ENCODE measurements at regions of chr4 and their contacts with region 1.

Region 1: DNA sequence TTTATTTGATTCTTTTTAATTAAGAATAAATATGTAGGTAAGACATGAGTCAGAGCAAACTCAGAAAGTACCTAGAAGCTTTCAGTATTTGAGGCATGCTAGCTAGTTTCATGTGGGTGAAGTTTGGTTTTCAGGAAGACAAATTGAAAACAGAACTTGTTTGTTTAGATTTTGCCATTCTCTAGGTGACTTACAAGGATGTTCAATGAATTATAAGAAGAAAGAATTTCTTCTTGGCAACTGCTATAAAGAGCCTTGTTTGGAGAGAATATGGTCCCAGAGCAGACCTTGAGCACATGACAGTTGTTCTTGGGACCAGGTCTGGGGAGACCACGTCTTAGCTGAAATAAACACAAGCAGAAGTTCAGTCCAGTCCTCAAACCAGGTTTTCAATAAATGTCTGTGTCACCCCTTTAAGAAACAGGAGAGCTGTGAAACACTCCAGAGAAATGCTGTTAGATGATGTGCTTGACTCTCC is 38.0 kb upstream of the IL21 start:
- DNase-seq: no peak
- H3K4me3 Mint-ChIP-seq: peak overlapping the region; percentile 37
- H3K27ac Mint-ChIP-seq: peak overlapping the region; percentile 91
- H3K4me1 Mint-ChIP-seq: peaks cover 54% of the 10 kb centered on the region
- H3K27me3 Mint-ChIP-seq: no peaks in the 10 kb centered on the region

Region 2: DNA sequence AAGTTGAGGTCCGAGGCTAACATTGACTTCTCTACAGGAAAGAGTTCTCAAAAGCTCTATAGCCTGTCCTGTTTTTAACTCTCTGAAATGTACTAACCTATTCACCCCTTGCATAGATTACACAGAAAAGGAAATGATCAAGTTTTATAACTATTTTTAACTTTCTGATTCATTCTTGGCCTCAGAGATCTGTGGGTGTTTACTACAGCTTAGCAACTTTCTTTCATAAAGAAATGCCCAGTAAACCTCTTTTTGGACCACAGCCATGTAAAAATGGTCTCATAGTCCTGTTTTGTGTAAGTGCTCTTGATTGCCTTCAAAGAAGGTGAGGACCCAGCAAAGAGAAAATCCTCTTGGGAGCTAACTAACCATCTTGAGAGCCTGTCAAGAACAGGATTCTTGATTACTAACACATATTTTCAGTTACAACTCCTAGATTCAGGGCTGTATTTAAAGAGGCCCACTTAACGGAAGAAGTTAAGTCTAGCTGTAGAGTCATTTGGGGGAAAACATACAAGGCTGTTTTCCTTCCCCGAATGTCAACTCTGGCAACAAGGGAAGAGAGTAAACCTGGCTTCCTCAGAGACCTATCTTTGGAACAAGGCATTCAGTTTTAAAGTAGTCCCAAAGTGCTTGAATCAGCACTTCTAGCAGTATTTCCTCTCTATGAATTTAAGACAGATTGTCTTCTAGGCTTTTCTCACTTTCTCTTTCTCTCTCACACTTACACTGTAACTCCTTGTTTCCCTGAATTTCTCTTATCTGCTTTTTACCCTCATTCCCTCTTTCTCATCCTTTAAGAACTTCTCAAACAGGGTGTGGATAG is 116.2 kb before region 1 on chr4:
- intact Hi-C with region 1: loop called (anchors 5 kb)
- DNase-seq: no peak
- H3K4me3 Mint-ChIP-seq: peak overlapping the region; percentile 53
- H3K27ac Mint-ChIP-seq: peak overlapping the region; percentile 87
- H3K4me1 Mint-ChIP-seq: peaks cover 74% of the 10 kb centered on the region
- H3K27me3 Mint-ChIP-seq: peaks cover 1% of the 10 kb centered on the region

Region 3: DNA sequence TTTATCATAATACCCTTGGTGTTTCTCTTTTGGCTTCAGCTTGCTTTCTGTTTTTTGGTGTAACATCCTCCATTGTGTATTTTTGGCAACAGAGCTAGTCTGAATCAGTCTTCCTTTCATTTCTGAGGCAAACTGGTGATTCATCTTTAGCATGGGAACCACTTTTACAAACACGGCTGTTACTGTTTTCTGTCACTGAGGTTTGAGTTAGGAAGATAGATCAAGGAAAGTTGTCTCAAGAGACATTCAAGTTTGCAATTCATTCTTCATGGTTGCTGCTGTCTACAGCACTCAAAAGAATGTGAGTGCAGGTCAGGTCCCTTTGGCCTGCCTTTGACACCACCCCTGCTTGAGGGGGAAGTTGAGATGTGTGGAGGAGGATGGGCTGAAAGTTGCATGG is 74.3 kb before region 1 on chr4:
- intact Hi-C with region 1: loop called (anchors 5 kb)
- DNase-seq: no peak
- H3K4me3 Mint-ChIP-seq: peak overlapping the region; percentile 40
- H3K27ac Mint-ChIP-seq: peak overlapping the region; percentile 84
- H3K4me1 Mint-ChIP-seq: peaks cover 32% of the 10 kb centered on the region
- H3K27me3 Mint-ChIP-seq: no peaks in the 10 kb centered on the region

Region 4: GRCh38 chr4:122602277-122603142 is 56.3 kb before region 1 on chr4:
- intact Hi-C with region 1: loop called (anchors 5 kb)
- DNase-seq: no peak
- H3K4me3 Mint-ChIP-seq: peak overlapping the region; percentile 35
- H3K27ac Mint-ChIP-seq: peak overlapping the region; percentile 31
- H3K4me1 Mint-ChIP-seq: peaks cover 18% of the 10 kb centered on the region
- H3K27me3 Mint-ChIP-seq: peaks cover 16% of the 10 kb centered on the region

Measured in activated T-helper 2 cell treated with anti-CD3 and anti-CD28 coated beads, Interferon-gamma antibody, Interleukin-2, Interleukin-4, amounts not matched to agents 10 μg/mL and 5 μg/mL and 100 μg/mL, durations not matched to agents 14 hours and 24 hours and 36 hours (primary cell).